GM18951 (cell line): ENCODE measurements at regions of chr17 and their contacts with region 1.

Region 1: DNA sequence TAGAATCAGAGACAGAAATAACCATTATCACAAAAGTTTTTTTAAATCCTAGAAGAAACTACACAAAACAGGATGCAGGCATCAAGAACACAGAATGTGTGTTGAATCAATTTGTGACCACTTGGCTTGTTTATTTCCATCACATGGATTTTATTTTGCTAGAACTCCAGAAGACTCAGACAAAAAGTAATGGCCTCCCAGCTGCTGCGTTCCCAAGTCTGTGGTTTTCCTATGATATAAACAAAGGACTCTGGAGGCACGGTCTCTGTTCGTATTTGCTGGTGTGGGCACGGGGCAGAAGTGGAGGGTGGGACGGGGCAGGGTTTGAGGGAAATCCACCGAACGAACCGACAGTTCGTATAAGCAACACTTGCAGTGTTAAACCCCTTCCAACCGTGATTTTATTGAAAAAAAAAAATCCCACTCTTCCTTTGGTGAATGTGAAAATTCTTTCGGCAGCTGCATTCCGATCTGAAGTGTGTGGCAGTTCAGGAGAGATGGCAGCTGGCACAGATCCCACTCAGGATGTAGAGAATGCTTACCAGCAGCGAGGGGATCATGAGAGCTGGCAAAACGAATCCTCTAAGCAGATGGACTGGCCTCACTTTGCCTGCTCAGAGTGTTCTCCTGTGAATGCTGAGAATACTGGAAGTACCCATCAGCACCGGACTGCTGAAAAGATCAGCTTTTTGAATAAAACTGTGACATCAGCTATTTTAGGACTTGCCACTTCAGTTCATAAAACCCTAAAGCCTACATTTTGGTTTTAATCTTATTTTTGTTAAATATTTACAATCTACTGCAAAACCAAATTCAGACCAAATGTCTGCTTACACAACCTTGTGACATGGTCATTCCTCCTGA is 165.2 kb downstream of the VPS53 start:
- POLR2A ChIP-seq: no peak

Region 2: GRCh38 chr17:491086-492021 is 58.1 kb before region 1 on chr17:
- in situ Hi-C with region 1: no loop called
- POLR2A ChIP-seq: no peak

Region 3: GRCh38 chr17:511001-511698 is 38.3 kb before region 1 on chr17:
- in situ Hi-C with region 1: no loop called
- POLR2A ChIP-seq: no peak

Region 4: GRCh38 chr17:640436-640835 is 91.0 kb after region 1 on chr17:
- in situ Hi-C with region 1: no loop called
- POLR2A ChIP-seq: no peak

Region 5: DNA sequence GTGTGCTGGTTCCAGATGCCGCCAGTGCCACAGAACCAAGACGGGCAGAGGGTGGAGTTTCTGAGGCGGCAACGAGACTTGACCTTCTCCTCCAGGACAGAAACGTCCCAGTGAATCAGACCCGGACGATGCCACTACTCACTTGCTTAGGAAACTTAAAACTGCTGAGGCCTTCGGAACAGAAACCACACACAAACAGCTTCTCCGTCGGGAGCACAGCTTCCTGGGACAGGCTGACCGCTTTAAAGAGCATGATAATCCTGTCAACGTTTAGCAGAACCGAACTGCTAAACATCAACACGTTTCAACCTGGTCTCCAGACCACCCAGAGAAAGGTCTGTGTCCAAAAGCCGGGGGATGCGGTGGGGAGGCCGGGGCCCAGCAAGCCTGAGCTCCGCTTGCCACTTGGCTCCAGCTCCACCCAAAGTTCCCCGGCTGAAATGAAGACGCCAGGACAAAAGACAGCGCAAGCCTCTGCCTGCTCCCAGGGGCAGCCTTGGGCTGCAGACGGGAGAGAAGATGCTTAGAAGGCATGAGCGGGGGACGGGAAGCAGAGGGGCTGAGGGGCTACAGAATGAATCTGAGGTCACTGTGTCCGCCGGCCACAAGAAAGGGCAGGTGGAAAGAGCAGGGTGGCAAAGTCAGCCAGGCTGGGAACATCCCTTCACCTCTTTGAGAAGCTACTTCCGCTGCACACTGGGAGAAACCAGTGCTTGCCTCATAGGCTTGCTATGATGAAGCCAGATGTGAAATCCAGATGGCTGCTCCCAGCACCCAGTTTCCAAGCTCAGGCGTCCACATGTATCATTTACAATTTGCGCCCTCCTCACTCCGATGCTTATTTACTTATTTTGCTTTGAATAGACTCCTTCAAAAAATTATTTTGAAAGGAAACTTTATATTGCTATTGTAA is 301.7 kb after region 1 on chr17:
- in situ Hi-C with region 1: no loop called
- POLR2A ChIP-seq: no peak

Region 6: GRCh38 chr17:996554-997344 is 447.3 kb after region 1 on chr17 and contains the start of gene TIMM22:
- in situ Hi-C with region 1: loop called (anchors 25 kb)
- POLR2A ChIP-seq: peak; percentile 92